ENCODE measurements at regions of chr12 and their contacts with region 1.

Region 1: GRCh38 chr12:29317556-29318363 is 63.2 kb downstream of the ERGIC2 start:
- H3K4me3 Mint-ChIP-seq: no peak overlapping the region
- H3K27ac Mint-ChIP-seq: no peak overlapping the region
- H3K4me1 Mint-ChIP-seq: peaks cover 20% of the 10 kb centered on the region
- H3K27me3 Mint-ChIP-seq: peaks cover 11% of the 10 kb centered on the region

Region 2: DNA sequence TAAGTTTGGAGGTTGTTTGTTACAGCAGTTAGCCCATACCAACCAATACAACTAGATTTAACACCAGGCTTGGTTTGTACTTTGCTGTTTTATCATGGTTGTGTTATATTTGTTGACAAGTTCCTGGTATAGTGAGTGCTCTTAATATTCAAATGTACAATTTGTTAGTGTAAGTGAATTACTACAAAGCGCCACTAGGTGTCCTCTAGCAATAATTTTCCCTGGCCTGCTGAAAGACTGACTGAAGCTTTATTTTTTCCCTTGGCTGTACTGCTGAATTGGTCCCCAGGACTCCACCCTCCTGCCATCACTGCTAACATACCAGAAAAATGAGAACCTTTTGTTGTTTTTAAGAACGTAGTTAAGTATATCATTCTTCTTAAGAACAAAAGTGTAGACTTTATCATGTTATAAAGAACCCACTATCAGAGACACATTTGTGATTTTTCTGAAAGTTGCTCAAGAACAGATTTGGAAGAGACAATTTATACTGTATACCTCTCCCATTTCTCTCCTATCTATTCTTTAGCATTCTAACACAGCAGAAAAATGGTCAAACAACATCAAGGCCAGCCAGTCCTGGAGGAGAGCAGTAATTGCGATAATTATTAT is 244.0 kb before region 1 on chr12:
- intact Hi-C with region 1: loop called (anchors 2 kb)
- H3K4me3 Mint-ChIP-seq: no peak overlapping the region
- H3K27ac Mint-ChIP-seq: no peak overlapping the region
- H3K4me1 Mint-ChIP-seq: no peaks in the 10 kb centered on the region
- H3K27me3 Mint-ChIP-seq: peaks cover 13% of the 10 kb centered on the region

Region 3: GRCh38 chr12:29088611-29089219 is 229.0 kb before region 1 on chr12:
- intact Hi-C with region 1: loop called (anchors 1 kb)
- H3K4me3 Mint-ChIP-seq: no peak overlapping the region
- H3K27ac Mint-ChIP-seq: no peak overlapping the region
- H3K4me1 Mint-ChIP-seq: no peaks in the 10 kb centered on the region
- H3K27me3 Mint-ChIP-seq: peaks cover 50% of the 10 kb centered on the region

Measured in dendritic cell treated with granulocyte-macrophage colony-stimulating factor and Interleukin-4, amounts not matched to agents 40 ng/mL and 50 ng/mL, for 4 days (primary cell).